ENCODE measurements at regions of chr11 and their contacts with region 1.

Region 1: GRCh38 chr11:46378811-46379481 is 2.5 kb upstream of the MDK start:
- DNase-seq: no peak
- H3K4me3 ChIP-seq: no peak overlapping the region
- H3K4me3 Mint-ChIP-seq: peak overlapping the region in 6 of 7 donors; percentile 20 to 76 (median 54)
- H3K27ac ChIP-seq: no peak overlapping the region
- H3K27ac Mint-ChIP-seq: peak overlapping the region in 7 of 8 donors; percentile 43 to 95 (median 68)
- H3K4me1 ChIP-seq: peaks cover 12% of the 10 kb centered on the region
- H3K4me1 Mint-ChIP-seq: peaks cover 5 to 24% (median 6%) of the 10 kb centered on the region in 3 donors
- H3K27me3 ChIP-seq: peaks cover 12% of the 10 kb centered on the region
- H3K27me3 Mint-ChIP-seq: peaks cover 9 to 15% of the 10 kb centered on the region in 2 donors

Region 2: GRCh38 chr11:46315033-46315738 is 63.8 kb before region 1 on chr11:
- CTCF ChIA-PET with region 1: no interaction called
- POLR2A ChIA-PET with region 1: no interaction called
- DNase-seq: peak; percentile 59 to 82 (median 65)
- H3K4me3 ChIP-seq: no peak overlapping the region
- H3K4me3 Mint-ChIP-seq: no peak overlapping the region
- H3K27ac ChIP-seq: no peak overlapping the region
- H3K27ac Mint-ChIP-seq: peak overlapping the region in 2 of 8 donors; percentile 67 to 70
- H3K4me1 ChIP-seq: peaks cover 12% of the 10 kb centered on the region
- H3K4me1 Mint-ChIP-seq: peaks cover 10 to 16% (median 14%) of the 10 kb centered on the region in 3 donors
- H3K27me3 ChIP-seq: no peaks in the 10 kb centered on the region
- H3K27me3 Mint-ChIP-seq: peaks cover 5 to 11% of the 10 kb centered on the region in 2 donors

Region 3: GRCh38 chr11:46352063-46352841 is 26.7 kb before region 1 on chr11:
- CTCF ChIA-PET with region 1: interaction called, 358 read pairs
- POLR2A ChIA-PET with region 1: interaction called, 5 read pairs
- DNase-seq: peak; percentile 74 to 88 (median 78)
- H3K4me3 ChIP-seq: peak overlapping the region; percentile 66
- H3K4me3 Mint-ChIP-seq: peak overlapping the region; percentile 80 to 98 (median 92)
- H3K27ac ChIP-seq: peak overlapping the region; percentile 49
- H3K27ac Mint-ChIP-seq: peak overlapping the region; percentile 87 to 98 (median 92)
- H3K4me1 ChIP-seq: peaks cover 74% of the 10 kb centered on the region
- H3K4me1 Mint-ChIP-seq: peaks cover 75 to 83% (median 80%) of the 10 kb centered on the region in 3 donors
- H3K27me3 ChIP-seq: no peaks in the 10 kb centered on the region
- H3K27me3 Mint-ChIP-seq: no peaks in the 10 kb centered on the region

Region 4: GRCh38 chr11:46389450-46390253 is 10.7 kb after region 1 on chr11:
- CTCF ChIA-PET with region 1: interaction called, 10 read pairs
- POLR2A ChIA-PET with region 1: no interaction called
- DNase-seq: no peak
- H3K4me3 ChIP-seq: peak overlapping the region; percentile 32
- H3K4me3 Mint-ChIP-seq: peak overlapping the region in 5 of 7 donors; percentile 19 to 59 (median 51)
- H3K27ac ChIP-seq: no peak overlapping the region
- H3K27ac Mint-ChIP-seq: no peak overlapping the region
- H3K4me1 ChIP-seq: peaks cover 22% of the 10 kb centered on the region
- H3K4me1 Mint-ChIP-seq: peaks cover 26 to 41% (median 29%) of the 10 kb centered on the region in 3 donors
- H3K27me3 ChIP-seq: peaks cover 30% of the 10 kb centered on the region
- H3K27me3 Mint-ChIP-seq: peaks cover 56 to 73% of the 10 kb centered on the region in 2 donors

Region 5: DNA sequence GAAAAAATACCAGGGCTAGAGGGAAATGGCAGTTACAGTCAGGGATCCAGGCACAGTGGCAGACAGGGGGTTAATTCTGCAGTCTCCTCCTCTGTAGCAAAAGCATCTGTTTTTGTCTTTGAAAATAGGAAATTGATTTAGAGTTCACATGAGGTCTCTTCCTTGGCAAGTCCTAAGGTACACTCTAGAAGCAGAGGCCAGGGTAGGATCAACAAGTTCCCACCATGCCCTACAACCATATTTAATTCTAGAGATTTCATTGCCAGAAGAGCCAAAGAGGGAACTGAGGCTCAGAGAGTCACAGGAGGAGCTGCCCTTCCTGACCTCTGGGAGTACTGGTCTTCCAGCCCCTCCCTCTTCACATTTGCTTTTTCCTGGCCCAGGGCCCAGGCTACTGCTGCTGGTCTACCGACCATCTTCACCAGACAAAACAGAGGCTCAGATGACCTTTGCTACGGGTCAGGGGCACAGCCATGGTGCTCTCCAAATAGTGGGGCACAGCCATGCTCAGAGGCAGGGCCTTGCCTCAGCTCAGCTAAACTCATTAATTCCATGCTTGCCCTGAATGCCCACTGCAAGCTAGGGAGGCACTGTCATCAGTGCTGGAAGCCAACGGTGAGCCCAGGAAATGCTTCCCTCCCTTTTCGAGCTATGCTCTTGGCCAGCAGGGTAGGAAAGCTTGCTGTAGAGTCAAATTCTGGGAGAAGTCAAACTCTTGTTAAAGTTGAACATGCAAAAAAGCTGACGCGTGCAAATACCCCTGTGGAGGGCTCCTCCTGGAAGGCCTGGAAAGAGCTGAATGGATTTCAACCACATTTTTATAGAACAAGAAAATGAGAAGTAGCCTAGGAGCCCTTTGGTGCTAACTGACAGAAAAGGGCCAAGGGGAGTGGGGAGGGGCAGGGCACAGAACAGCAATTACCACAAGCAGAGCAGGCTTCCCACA is 24.3 kb after region 1 on chr11:
- CTCF ChIA-PET with region 1: no interaction called
- POLR2A ChIA-PET with region 1: no interaction called
- DNase-seq: no peak
- H3K4me3 ChIP-seq: no peak overlapping the region
- H3K4me3 Mint-ChIP-seq: peak overlapping the region in 2 of 7 donors; percentile 16 to 19
- H3K27ac ChIP-seq: no peak overlapping the region
- H3K27ac Mint-ChIP-seq: no peak overlapping the region
- H3K4me1 ChIP-seq: no peaks in the 10 kb centered on the region
- H3K4me1 Mint-ChIP-seq: no peaks in the 10 kb centered on the region
- H3K27me3 ChIP-seq: no peaks in the 10 kb centered on the region
- H3K27me3 Mint-ChIP-seq: no peaks in the 10 kb centered on the region

Measured in CD8-positive, alpha-beta memory T cell (primary cell).